B cell (primary cell): ENCODE measurements at regions of chr20 and their contacts with region 1.

Region 1: DNA sequence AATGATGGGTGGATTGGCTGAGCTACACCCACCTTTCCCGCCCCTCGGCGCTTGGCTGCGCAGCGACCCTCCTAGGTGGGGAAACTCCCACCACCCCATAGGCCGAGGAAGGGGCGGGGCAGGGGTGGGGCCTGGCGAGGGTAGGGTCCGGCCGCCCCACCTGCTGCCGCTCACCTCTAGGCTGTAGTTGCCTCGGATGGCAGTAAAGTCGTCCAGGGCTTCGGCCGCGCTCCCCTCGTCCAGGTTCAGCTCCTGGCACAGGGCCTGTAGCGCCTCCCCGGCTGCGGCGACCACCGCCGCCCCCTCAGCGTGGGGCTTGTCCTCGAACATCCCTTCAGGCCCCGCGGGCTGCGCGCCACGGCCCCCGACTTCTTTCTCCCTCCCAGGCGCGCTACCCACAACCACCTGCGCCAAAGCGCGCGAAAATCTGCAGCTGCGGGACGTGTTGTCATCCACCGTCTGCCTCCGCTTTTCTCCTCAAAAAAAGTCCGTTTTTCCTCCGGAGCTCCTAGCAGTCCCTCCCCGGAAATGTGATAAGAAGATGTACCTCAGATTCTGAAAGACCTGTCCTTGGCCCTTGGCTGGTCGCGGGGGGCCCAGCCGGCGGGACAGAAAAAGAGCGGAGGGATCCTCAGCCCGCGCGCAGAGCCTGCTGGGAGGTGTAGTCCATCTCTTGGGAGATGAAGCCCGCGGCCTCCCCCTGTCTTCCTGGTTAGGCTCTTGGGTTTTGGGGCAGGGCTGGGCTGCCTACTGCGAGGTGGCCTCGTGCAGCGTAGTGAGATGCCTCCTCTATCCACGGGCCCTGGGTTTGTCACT is at the start of gene RBL1:
- DNase-seq: peak; percentile 96
- ATAC-seq: peak; percentile 86
- H3K4me3 ChIP-seq: peak within 1 kb of the TSS; percentile 62 to 77 (median 73)
- H3K4me3 Mint-ChIP-seq: peak within 1 kb of the TSS; percentile 98
- H3K27ac ChIP-seq: peak within 1 kb of the TSS; percentile 88 to 95
- H3K27ac Mint-ChIP-seq: peak within 1 kb of the TSS; percentile 100
- H3K4me1 ChIP-seq: peaks cover 13 to 28% of the 10 kb centered on the region in 2 donors
- H3K4me1 Mint-ChIP-seq: peaks cover 29% of the 10 kb centered on the region
- H3K27me3 ChIP-seq: no peaks in the 10 kb centered on the region
- H3K27me3 Mint-ChIP-seq: no peaks in the 10 kb centered on the region
- CTCF ChIP-seq: peak; percentile 13
- total RNA-seq, gene RBL1: 25.5 and 27.8 TPM in 2 replicates

Region 2: GRCh38 chr20:37042986-37043972 is 52.5 kb before region 1 on chr20:
- CTCF ChIA-PET with region 1: no interaction called
- POLR2A ChIA-PET with region 1: no interaction called
- intact Hi-C with region 1: loop called (anchors 5 kb)
- DNase-seq: peak; percentile 67
- ATAC-seq: peak; percentile 53
- H3K4me3 ChIP-seq: peak overlapping the region; percentile 24 to 67 (median 44)
- H3K4me3 Mint-ChIP-seq: peak overlapping the region; percentile 85
- H3K27ac ChIP-seq: peak overlapping the region; percentile 76 to 89
- H3K27ac Mint-ChIP-seq: peak overlapping the region; percentile 89
- H3K4me1 ChIP-seq: peaks cover 23 to 28% of the 10 kb centered on the region in 2 donors
- H3K4me1 Mint-ChIP-seq: peaks cover 25% of the 10 kb centered on the region
- H3K27me3 ChIP-seq: no peaks in the 10 kb centered on the region
- H3K27me3 Mint-ChIP-seq: no peaks in the 10 kb centered on the region
- CTCF ChIP-seq: no peak